ENCODE measurements at regions of chr5 and their contacts with region 1.

Region 1: GRCh38 chr5:68287976-68288706 is 72.6 kb downstream of the PIK3R1 start:
- DNase-seq: peak; percentile 73
- CTCF ChIP-seq: no peak

Region 2: GRCh38 chr5:68272289-68272688 is 15.9 kb before region 1 on chr5:
- CTCF ChIA-PET with region 1: interaction called, 34 read pairs
- POLR2A ChIA-PET with region 1: no interaction called
- DNase-seq: no peak
- CTCF ChIP-seq: peak; percentile 23

Region 3: DNA sequence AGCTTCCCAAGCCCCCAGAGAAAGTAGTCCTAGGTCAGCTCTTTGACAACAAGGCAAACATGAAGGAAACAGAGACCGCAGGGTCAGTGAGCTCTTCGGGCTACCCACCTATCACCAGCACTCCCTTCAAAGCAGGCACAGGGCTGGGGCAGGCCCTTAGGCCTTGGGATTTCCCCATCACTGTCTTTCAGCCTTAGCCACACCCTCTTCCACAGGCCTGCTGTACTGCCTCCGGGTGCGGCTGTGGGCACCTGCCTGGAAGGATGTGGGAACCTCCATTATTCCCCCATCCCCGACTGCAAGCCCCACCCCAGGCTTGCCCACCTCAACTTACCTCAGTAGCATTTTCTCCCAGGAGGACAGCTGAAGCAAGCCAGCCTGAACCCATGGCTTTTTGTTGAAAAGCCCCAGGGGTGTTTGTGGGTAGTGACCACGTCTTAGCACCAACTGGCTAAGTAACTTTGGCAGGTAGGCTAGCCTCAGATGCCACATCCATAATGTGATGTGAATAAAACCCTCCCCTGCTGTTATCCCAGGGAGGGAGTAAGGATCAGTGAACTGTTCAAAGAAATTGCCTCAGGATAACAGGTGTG is 27.6 kb after region 1 on chr5:
- CTCF ChIA-PET with region 1: interaction called, 12 read pairs
- POLR2A ChIA-PET with region 1: no interaction called
- DNase-seq: peak; percentile 81
- CTCF ChIP-seq: no peak

Region 4: DNA sequence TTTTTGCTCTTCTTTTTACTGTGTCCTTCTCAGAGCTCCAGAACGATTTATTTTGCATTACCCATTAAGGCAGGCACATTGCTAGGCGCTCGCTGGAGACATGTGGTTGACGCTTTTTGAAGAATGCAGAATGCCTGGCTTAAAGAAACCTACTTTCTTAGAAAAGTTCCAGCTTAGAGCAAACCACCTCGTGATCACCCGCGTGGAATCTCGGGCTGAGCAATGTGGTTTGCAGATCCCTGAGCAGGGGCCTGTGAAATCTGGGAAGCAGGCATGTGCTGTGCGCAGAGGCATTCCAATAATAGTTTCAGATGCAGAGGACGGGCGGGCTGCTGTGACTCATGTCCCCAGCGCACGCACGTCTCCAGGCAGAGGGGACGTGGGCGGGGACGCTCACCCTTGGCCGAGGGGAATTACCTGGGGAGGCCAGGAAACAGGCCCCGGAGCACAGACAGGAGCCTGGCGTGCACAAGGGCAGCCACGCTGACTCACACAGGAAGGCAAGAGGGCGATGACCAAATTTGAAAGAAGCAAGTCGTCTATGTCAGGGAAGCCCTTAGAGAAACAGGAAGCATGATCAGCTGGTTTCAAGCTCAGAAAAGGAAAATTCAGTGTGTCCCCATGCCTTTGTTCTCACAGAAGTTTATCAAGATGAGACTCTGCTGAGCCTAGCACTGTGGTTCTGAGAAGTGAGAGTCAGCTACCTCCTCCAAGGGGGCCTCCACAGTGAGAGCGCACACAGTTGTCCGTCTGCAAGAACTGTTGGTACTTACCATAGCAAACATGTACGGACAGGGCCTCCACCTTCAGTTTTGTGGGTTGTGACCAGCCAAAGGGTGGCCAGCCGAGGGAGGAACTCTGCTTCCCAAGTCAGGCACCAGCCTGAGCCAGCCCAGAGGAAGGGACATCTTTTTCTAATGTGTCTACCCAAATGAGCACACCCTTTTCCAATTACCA is 146.1 kb after region 1 on chr5:
- CTCF ChIA-PET with region 1: interaction called, 17 read pairs
- POLR2A ChIA-PET with region 1: no interaction called
- DNase-seq: peak; percentile 91
- CTCF ChIP-seq: no peak

Region 5: DNA sequence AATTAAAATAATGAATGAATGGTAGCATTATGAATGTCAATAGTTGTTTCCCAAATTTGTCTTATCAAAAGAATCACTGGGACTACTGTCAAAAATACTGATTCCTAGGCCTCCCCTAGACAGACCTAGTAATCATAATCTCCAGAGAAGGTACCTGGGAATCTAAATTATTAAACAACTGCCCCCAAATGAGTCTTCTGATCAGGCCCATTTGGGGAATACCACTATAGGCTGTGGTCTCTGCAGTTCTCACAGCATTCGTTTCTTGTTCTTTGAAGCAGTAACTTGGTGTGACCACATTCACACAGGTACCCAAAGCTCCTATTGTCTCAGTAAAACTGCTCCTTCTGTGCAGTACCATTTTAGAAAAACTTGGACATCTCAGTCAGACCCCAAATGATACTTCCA is 158.3 kb after region 1 on chr5:
- CTCF ChIA-PET with region 1: interaction called, 11 read pairs
- POLR2A ChIA-PET with region 1: no interaction called
- DNase-seq: peak; percentile 31
- CTCF ChIP-seq: no peak

Region 6: GRCh38 chr5:68478301-68479095 is 190.4 kb after region 1 on chr5:
- CTCF ChIA-PET with region 1: interaction called, 12 read pairs
- POLR2A ChIA-PET with region 1: no interaction called
- DNase-seq: no peak
- CTCF ChIP-seq: no peak